ENCODE measurements at regions of chr12 and their contacts with region 1.

Region 1: GRCh38 chr12:132908145-132909044 is 21.0 kb upstream of the CHFR start:
- DNase-seq: peak; percentile 88 to 99 (median 95)
- ATAC-seq: peak; percentile 89
- H3K4me3 ChIP-seq: peak overlapping the region; percentile 85
- H3K4me3 Mint-ChIP-seq: peak overlapping the region; percentile 96
- H3K27ac ChIP-seq: peak overlapping the region; percentile 78 to 98
- H3K27ac Mint-ChIP-seq: peak overlapping the region; percentile 94
- H3K4me1 ChIP-seq: peaks cover 34% of the 10 kb centered on the region
- H3K4me1 Mint-ChIP-seq: peaks cover 26% of the 10 kb centered on the region
- H3K27me3 ChIP-seq: no peaks in the 10 kb centered on the region
- H3K27me3 Mint-ChIP-seq: no peaks in the 10 kb centered on the region
- CTCF ChIP-seq: no peak

Region 2: GRCh38 chr12:132162508-132163031 is 745.8 kb before region 1 on chr12:
- CTCF ChIA-PET with region 1: no interaction called
- POLR2A ChIA-PET with region 1: no interaction called
- intact Hi-C with region 1: no loop called
- DNase-seq: peak in 4 of 14 experiments; percentile 32 to 77 (median 55)
- ATAC-seq: peak; percentile 66
- H3K4me3 ChIP-seq: peak overlapping the region; percentile 38
- H3K4me3 Mint-ChIP-seq: no peak overlapping the region
- H3K27ac ChIP-seq: no peak overlapping the region
- H3K27ac Mint-ChIP-seq: no peak overlapping the region
- H3K4me1 ChIP-seq: peaks cover 25% of the 10 kb centered on the region
- H3K4me1 Mint-ChIP-seq: peaks cover 6% of the 10 kb centered on the region
- H3K27me3 ChIP-seq: no peaks in the 10 kb centered on the region
- H3K27me3 Mint-ChIP-seq: no peaks in the 10 kb centered on the region
- CTCF ChIP-seq: no peak

Region 3: DNA sequence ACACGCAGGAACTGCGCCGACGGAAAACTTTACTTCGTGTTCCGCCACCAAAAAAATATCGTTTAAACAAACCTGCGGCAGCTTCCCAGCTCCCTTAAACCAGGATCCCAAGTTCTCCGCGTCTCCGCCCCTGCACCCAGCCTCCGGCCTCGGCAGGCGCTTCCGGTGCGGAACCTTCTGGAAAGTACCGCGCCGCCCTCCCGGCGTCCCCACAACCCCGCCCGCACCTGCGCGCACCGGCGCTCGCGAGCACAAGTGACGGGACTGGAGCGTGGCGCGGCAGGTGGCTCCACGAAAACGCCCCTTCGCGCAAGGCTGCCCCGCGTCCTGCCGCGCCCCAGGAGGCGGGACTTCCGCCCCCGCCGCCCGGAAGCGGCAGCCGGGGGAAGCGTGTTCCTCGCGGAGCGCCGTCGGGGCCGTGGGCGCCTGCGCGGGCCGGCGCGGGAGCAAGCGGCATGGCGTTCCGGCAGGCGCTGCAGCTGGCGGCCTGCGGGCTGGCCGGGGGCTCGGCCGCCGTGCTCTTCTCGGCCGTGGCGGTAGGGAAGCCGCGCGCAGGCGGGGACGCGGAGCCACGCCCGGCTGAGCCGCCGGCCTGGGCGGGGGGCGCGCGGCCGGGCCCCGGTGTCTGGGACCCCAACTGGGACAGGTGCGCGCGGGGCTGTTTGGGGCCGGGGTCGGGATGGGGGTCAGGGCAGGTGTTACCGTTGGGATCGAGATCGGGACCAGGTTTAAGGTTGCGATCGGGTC is 197.8 kb before region 1 on chr12 and contains the start of gene PGAM5:
- CTCF ChIA-PET with region 1: no interaction called
- POLR2A ChIA-PET with region 1: interaction called, 6 read pairs
- intact Hi-C with region 1: loop called in 1 of 2 experiments (anchors 5 kb)
- DNase-seq: peak; percentile 83 to 99 (median 92)
- ATAC-seq: peak; percentile 97
- H3K4me3 ChIP-seq: peak within 1 kb of the TSS; percentile 81
- H3K4me3 Mint-ChIP-seq: peak within 1 kb of the TSS; percentile 93
- H3K27ac ChIP-seq: peak within 1 kb of the TSS; percentile 88 to 93
- H3K27ac Mint-ChIP-seq: peak within 1 kb of the TSS; percentile 92
- H3K4me1 ChIP-seq: peaks cover 34% of the 10 kb centered on the region
- H3K4me1 Mint-ChIP-seq: peaks cover 16% of the 10 kb centered on the region
- H3K27me3 ChIP-seq: no peaks in the 10 kb centered on the region
- H3K27me3 Mint-ChIP-seq: no peaks in the 10 kb centered on the region
- CTCF ChIP-seq: no peak
- total RNA-seq, gene PGAM5: 12.8 to 15.1 TPM

Region 4: GRCh38 chr12:132812631-132813305 is 95.6 kb before region 1 on chr12:
- CTCF ChIA-PET with region 1: no interaction called
- POLR2A ChIA-PET with region 1: interaction called, 3 read pairs
- intact Hi-C with region 1: loop called in 1 of 2 experiments (anchors 2 kb)
- DNase-seq: peak in 3 of 14 experiments; percentile 28 to 41 (median 38)
- ATAC-seq: peak; percentile 44
- H3K4me3 ChIP-seq: no peak overlapping the region
- H3K4me3 Mint-ChIP-seq: no peak overlapping the region
- H3K27ac ChIP-seq: no peak overlapping the region
- H3K27ac Mint-ChIP-seq: peak overlapping the region; percentile 30
- H3K4me1 ChIP-seq: peaks cover 8% of the 10 kb centered on the region
- H3K4me1 Mint-ChIP-seq: peaks cover 14% of the 10 kb centered on the region
- H3K27me3 ChIP-seq: no peaks in the 10 kb centered on the region
- H3K27me3 Mint-ChIP-seq: no peaks in the 10 kb centered on the region
- CTCF ChIP-seq: no peak

Region 5: DNA sequence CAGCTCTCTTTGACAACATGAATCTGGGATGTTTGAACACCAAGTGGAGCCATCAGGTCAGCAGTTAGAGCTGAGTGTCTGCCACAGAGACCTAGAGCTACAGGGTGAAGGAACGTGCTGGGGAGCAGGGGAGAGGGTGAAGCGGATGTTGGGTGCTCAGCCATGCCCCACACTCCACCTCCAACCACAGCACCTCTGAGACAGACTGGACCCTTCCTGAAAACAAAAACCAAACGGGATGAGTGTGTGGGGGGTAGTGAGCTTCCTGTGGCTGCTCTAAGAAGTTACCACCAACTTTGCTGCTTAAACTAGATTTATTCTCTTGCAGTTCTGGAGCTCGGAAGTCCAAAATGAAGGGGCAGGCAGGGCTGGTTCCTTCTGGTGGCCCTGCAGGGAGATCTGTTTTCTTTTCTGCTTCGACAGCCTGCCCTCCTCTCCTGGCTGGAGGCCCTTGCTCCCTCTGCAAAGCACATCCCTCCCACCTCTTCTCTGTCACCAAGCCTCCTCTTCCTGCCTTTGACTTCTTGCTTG is 74.1 kb before region 1 on chr12:
- CTCF ChIA-PET with region 1: interaction called, 7 read pairs
- POLR2A ChIA-PET with region 1: interaction called, 22 read pairs
- intact Hi-C with region 1: loop called (anchors 1 kb)
- DNase-seq: peak in 10 of 14 experiments; percentile 6 to 64 (median 26)
- ATAC-seq: peak; percentile 78
- H3K4me3 ChIP-seq: no peak overlapping the region
- H3K4me3 Mint-ChIP-seq: peak overlapping the region; percentile 82
- H3K27ac ChIP-seq: peak overlapping the region; percentile 25 to 38
- H3K27ac Mint-ChIP-seq: peak overlapping the region; percentile 96
- H3K4me1 ChIP-seq: peaks cover 42% of the 10 kb centered on the region
- H3K4me1 Mint-ChIP-seq: peaks cover 45% of the 10 kb centered on the region
- H3K27me3 ChIP-seq: no peaks in the 10 kb centered on the region
- H3K27me3 Mint-ChIP-seq: no peaks in the 10 kb centered on the region
- CTCF ChIP-seq: no peak

Region 6: GRCh38 chr12:132940071-132940719 is 31.8 kb after region 1 on chr12:
- CTCF ChIA-PET with region 1: no interaction called
- POLR2A ChIA-PET with region 1: no interaction called
- intact Hi-C with region 1: no loop called
- DNase-seq: no peak
- ATAC-seq: no peak
- H3K4me3 ChIP-seq: no peak overlapping the region
- H3K4me3 Mint-ChIP-seq: no peak overlapping the region
- H3K27ac ChIP-seq: no peak overlapping the region
- H3K27ac Mint-ChIP-seq: no peak overlapping the region
- H3K4me1 ChIP-seq: no peaks in the 10 kb centered on the region
- H3K4me1 Mint-ChIP-seq: no peaks in the 10 kb centered on the region
- H3K27me3 ChIP-seq: no peaks in the 10 kb centered on the region
- H3K27me3 Mint-ChIP-seq: no peaks in the 10 kb centered on the region
- CTCF ChIP-seq: no peak

Region 7: GRCh38 chr12:132956011-132956788 is 47.8 kb after region 1 on chr12 and contains the start of gene ZNF605:
- CTCF ChIA-PET with region 1: interaction called, 3 read pairs
- POLR2A ChIA-PET with region 1: interaction called, 5 read pairs
- intact Hi-C with region 1: loop called in 1 of 2 experiments (anchors 2 kb)
- DNase-seq: peak; percentile 63 to 94 (median 79)
- ATAC-seq: peak; percentile 95
- H3K4me3 ChIP-seq: peak within 1 kb of the TSS; percentile 78
- H3K4me3 Mint-ChIP-seq: peak within 1 kb of the TSS; percentile 98
- H3K27ac ChIP-seq: peak within 1 kb of the TSS; percentile 33 to 64
- H3K27ac Mint-ChIP-seq: peak within 1 kb of the TSS; percentile 89
- H3K4me1 ChIP-seq: peaks cover 23% of the 10 kb centered on the region
- H3K4me1 Mint-ChIP-seq: peaks cover 29% of the 10 kb centered on the region
- H3K27me3 ChIP-seq: no peaks in the 10 kb centered on the region
- H3K27me3 Mint-ChIP-seq: no peaks in the 10 kb centered on the region
- CTCF ChIP-seq: no peak
- total RNA-seq, gene ZNF605: 5.3 to 5.8 TPM

Region 8: DNA sequence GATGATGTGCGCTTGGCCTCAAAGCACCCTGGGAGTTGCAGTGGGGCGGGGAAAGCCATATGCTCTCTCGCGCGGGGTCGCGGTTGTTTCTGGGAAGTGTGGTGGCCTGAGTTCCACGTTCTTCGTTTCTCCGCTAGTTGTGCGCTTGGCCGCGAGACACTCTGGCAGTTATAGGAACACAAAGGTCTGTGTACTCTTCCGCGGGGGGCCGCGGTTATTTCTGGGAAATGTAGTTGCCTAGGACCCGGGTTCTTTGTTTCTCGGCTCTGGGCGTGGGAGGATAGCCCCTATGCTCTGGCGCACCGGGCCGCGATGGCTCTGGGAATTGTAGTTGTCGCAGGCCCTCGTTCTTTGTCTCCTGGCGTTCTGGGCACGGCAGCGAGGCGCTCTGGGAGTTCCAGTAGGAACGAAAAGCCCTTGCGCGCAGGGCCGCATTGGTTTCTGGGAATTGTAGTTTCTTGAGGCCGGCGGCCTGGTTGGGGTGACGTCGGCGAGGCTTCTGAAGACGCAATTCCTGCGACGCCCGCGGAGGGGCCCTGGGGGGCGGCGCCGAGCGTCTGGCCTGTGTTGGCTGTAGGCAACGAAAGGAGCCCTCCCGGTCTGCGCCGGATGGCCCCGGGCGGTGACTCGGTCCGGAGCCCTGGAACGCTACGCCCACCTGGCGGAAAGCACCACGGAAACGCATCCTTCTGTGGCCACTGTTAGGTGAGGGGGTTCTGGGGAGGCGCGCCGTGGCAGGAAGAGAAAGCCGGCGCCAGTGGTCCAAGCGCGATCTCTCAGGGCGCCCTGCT is 172.2 kb after region 1 on chr12 and contains the start of gene ZNF140:
- CTCF ChIA-PET with region 1: interaction called, 6 read pairs
- POLR2A ChIA-PET with region 1: interaction called, 16 read pairs
- intact Hi-C with region 1: loop called in 1 of 2 experiments (anchors 2 kb)
- DNase-seq: peak; percentile 86 to 98 (median 92)
- ATAC-seq: peak; percentile 54
- H3K4me3 ChIP-seq: peak within 1 kb of the TSS; percentile 82
- H3K4me3 Mint-ChIP-seq: peak within 1 kb of the TSS; percentile 74
- H3K27ac ChIP-seq: peak within 1 kb of the TSS; percentile 98 to 99
- H3K27ac Mint-ChIP-seq: no peak within 1 kb of the TSS
- H3K4me1 ChIP-seq: peaks cover 23% of the 10 kb centered on the region
- H3K4me1 Mint-ChIP-seq: peaks cover 16% of the 10 kb centered on the region
- H3K27me3 ChIP-seq: no peaks in the 10 kb centered on the region
- H3K27me3 Mint-ChIP-seq: no peaks in the 10 kb centered on the region
- CTCF ChIP-seq: peak; percentile 43
- total RNA-seq, gene ZNF140: 6.6 to 8.5 TPM